ENCODE measurements at regions of chr4 and their contacts with region 1.

Region 1: DNA sequence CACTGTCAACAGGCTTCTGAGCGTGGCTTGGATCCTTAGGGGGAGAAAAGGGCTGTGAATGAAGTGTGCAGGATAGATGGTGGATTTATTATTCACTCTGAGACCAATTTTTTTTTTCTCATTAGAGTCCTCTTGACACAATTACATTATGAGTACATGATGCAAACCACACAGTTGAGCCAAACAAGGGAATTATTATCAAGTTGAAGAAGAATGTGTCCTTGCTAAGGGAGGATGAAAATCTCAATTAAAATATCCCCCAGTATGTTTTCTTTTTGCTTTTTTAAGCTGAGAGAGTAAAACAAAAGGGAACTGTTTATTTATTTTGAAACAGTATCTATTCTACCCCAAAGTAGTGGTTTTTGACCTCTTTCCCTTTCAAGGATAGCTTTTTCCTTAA is 40.4 kb downstream of the RPS3A start:
- DNase-seq: no peak
- CTCF ChIP-seq: no peak

Region 2: GRCh38 chr4:150960818-150961217 is 179.0 kb before region 1 on chr4:
- CTCF ChIA-PET with region 1: no interaction called
- POLR2A ChIA-PET with region 1: no interaction called
- DNase-seq: no peak
- CTCF ChIP-seq: no peak

Region 3: DNA sequence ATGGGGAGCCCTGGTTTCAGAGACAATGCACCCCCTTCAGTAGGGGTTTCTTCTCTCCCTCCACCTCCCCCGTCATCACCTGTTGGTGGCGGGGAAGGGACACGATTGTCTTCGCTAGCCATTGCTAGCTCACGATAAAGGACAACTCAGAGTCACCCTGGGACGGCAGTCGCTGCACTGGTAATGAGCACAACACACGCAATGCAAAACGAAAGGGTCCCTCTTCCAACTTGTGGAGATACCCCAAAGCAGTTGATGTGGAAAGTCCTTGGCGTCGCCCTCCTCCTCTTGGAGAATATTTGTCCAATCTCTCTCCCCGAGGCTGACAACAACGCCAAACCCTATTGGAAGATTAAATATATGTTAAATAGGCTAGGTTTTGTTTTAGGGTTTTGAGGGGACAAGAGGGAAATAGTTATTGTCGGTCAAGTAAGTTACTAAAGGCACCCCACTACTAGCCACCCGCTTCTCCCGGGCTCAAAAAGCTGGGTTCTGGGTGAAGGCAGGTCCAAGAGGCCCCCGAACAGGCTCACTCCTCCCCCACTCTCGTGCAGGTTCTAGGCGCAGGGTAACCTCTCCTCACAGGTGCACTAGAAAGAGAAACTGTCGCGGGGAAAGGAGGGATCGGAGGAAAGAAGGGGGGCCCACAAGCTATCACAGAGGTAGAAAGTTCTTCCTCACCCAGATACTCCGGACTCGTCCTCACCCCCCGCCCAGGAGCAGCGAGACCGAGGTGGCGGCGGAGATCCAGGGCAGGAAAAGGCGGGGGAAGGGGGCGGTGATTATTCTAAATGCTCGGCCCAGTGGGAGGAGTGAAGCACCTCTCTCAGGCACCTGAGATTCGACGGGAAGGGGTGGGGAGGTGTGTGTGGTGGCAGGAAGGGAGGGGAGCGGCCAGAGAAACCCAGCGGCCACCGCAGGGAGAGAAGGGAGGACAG is 125.0 kb before region 1 on chr4 and contains the start of gene LRBA:
- CTCF ChIA-PET with region 1: no interaction called
- POLR2A ChIA-PET with region 1: no interaction called
- DNase-seq: peak; percentile 82
- CTCF ChIP-seq: no peak

Region 4: GRCh38 chr4:151231917-151232595 is 92.2 kb after region 1 on chr4:
- CTCF ChIA-PET with region 1: no interaction called
- POLR2A ChIA-PET with region 1: interaction called, 11 read pairs
- DNase-seq: no peak
- CTCF ChIP-seq: no peak